A549 (cell line): ENCODE measurements at regions of chr2 and their contacts with region 1.

Region 1: GRCh38 chr2:37414470-37414949 is 70.1 kb downstream of the QPCT start:
- DNase-seq: peak; percentile 68 to 69
- ATAC-seq: peak; percentile 90 to 93
- H3K4me3 ChIP-seq: no peak overlapping the region
- H3K27ac ChIP-seq: peak overlapping the region; percentile 8 to 15; a peak in 2 of 6 replicates
- H3K4me1 ChIP-seq: peaks cover 6% of the 10 kb centered on the region; the same call in 2 of the 3 replicates
- CTCF ChIP-seq: peak; percentile 99
- EP300 ChIP-seq: no peak
- POLR2A ChIP-seq: no peak
- RAD21 ChIP-seq: peak; percentile 99

Region 2: DNA sequence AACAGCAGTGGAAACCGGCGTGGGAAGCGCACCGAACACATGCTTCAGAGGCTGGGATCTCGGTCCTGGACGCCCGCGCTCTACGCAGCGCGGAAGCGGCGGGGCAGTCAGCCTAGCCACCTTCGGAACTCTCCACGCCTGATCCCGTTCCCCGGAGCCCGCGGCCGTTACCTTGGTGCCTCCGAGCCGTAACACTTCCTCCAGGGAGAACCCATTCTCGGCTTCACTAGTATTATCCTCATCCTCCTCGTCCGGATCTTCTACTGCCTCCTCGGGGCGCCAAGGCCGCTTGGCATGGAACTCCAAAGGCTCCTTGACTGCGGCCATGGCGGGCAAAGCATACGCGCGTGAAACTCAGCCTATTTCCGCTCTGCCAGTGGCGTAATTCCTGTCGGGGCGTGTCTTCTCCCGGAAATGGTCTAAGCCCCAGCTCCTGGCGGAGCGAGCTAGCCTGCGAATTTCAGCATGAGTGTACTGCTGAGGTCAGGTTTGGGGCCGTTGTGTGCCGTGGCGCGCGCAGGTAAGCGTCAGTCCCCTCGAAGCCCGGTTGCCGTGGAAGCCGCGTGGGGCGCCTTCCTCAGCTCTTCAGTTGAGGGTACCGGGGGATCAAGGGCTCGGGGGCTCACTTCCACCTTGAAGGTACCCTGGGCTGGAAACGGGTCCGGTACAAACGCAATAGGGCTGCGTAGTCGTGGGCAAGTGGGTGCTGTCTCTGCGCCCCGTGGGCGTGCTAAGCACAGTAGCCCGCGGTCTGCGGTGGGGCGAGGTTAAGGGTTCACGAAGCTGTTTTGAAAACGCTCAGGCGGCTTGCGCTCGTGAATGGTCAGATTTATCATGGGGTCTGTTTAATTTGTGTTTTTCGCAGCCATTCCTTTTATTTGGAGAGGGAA is 183.0 kb before region 1 on chr2 and contains the starts of genes CEBPZ and NDUFAF7:
- CTCF ChIA-PET with region 1: no interaction called
- POLR2A ChIA-PET with region 1: no interaction called
- DNase-seq: peak; percentile 92 to 98
- ATAC-seq: peak; percentile 97 to 99
- H3K4me3 ChIP-seq: peak within 1 kb of the TSS; percentile 91
- H3K27ac ChIP-seq: peak within 1 kb of the TSS; percentile 92 to 95
- H3K4me1 ChIP-seq: peaks cover 27% of the 10 kb centered on the region
- CTCF ChIP-seq: no peak
- EP300 ChIP-seq: no peak
- POLR2A ChIP-seq: peak; percentile 97
- RAD21 ChIP-seq: no peak; a peak in 1 of 5 replicates
- polyA plus RNA-seq, gene CEBPZ: 44.1 and 70.9 TPM in 2 replicates
- polyA plus RNA-seq, gene NDUFAF7: 40.2 and 48.0 TPM in 2 replicates

Region 3: DNA sequence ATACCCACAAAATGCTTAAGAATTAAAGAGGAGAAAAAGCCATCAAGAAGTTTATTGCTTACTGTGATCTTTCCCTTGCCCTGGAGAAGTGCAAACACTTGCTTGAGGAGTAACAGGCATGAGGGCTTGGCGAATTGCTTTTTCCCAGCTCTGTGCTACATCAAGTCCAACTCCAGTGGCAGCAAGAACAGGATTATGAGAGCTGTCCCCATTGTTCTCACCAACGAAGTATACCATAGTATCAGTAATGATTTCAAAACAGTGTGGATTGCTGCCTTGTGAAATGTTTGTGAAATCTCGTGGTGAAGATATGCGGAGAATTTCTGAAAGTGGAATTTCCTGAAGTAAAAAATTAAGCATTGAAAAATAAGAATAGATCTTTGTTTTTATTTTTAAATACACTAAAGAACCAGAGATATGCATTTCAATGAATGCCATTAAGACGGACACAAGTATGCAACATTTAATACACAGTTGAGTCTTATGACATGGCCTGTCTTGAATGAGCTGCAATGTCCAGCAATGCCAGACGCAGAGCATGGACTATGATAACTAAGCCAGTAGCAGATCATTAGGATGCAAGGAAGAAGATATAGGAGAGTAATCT is 140.0 kb before region 1 on chr2:
- CTCF ChIA-PET with region 1: no interaction called
- POLR2A ChIA-PET with region 1: no interaction called
- DNase-seq: no peak
- ATAC-seq: no peak
- H3K4me3 ChIP-seq: no peak overlapping the region
- H3K27ac ChIP-seq: no peak overlapping the region
- H3K4me1 ChIP-seq: no peaks in the 10 kb centered on the region
- CTCF ChIP-seq: no peak
- EP300 ChIP-seq: no peak
- POLR2A ChIP-seq: no peak
- RAD21 ChIP-seq: no peak

Region 4: DNA sequence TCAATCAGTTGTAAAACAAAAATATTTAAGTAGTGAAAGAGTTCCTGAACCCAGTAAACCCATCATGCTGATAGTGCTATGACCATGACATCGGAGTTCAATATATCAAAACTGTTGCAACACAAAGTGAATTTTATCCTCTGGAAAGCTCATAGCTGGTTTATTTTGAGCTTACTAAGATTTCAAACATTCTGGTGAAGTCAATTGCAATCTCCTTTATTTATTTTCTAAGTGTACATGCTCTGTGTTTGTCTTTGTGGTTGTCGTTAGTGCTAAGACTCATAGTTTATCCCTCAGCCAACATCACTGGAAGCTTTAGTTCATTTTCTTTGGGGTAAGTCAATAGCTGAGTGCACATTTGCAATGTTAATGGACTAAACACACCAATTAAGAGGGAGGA is 21.8 kb after region 1 on chr2:
- CTCF ChIA-PET with region 1: interaction called, 18 read pairs
- POLR2A ChIA-PET with region 1: no interaction called
- DNase-seq: no peak
- ATAC-seq: no peak
- H3K4me3 ChIP-seq: no peak overlapping the region
- H3K27ac ChIP-seq: no peak overlapping the region
- H3K4me1 ChIP-seq: no peaks in the 10 kb centered on the region
- CTCF ChIP-seq: no peak
- EP300 ChIP-seq: no peak
- POLR2A ChIP-seq: no peak
- RAD21 ChIP-seq: no peak

Region 5: DNA sequence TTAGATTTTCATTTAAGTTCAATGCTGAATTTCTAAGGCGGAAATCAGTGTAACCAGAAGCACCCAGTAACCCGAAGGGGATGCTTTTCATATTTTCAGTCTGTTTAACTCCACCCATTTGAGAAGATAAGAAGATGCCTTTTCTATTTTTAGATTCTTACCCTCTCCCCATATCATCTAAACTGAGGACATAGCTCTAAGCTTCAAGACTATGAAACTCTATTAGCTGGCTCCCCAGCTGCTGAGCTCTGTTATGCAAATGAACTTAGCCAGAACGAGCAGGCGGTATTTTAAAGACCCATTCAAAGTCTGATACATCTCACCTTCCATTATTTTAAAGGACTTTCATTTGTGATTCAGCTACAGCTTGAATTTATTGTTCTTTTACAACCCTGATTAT is 240.4 kb after region 1 on chr2:
- CTCF ChIA-PET with region 1: interaction called, 10 read pairs
- POLR2A ChIA-PET with region 1: no interaction called
- DNase-seq: no peak
- ATAC-seq: no peak
- H3K4me3 ChIP-seq: no peak overlapping the region
- H3K27ac ChIP-seq: peak overlapping the region; percentile 11 to 85; a peak in 4 of 6 replicates
- H3K4me1 ChIP-seq: peaks cover 94% of the 10 kb centered on the region
- CTCF ChIP-seq: no peak
- EP300 ChIP-seq: no peak
- POLR2A ChIP-seq: no peak
- RAD21 ChIP-seq: no peak

Region 6: DNA sequence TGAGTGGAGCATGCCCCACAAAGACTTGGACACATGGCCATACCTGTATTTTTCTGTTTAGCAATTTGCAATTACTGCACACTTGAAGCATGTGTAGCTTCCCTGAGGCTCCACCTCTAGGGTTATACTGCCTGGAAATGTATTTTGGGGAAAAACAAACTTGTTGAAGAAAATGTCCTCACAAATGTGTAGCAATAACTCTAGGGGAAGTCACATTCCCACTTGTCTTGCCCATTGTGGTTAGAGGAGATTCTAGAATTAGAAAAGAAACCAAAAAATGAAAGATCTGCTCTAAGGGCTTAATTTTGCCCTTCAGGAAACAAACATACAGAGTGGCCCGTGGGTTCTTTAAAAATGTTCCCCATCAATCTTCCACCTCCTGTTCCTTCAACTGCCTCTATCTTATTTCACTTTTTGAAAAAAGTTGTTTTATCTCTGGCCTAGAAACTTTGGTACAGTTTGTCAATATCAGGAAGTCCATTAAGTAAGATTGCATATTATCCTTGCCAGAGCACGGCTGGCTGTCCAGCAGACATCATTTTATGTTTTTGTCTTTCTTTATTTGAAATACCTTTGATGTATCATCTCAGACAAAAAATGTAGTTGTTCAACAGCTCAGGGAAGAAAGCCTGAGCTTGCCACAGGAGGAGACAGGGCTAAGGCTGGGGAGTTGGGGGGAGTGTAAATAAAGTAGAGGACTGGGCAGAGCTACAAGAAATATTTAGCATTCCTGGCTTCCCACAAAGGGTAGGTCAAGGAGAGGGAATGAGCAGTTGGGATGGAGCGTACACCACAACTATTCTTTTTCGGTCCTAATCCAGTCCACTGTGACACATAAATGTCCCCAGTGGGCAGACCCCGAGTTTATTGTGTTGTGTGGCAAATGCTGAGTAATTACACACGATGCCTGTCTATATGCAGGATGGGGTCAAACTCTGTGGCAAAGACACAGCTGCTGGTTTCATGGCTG is 353.7 kb after region 1 on chr2:
- CTCF ChIA-PET with region 1: interaction called, 11 read pairs
- POLR2A ChIA-PET with region 1: interaction called, 4 read pairs
- DNase-seq: peak; percentile 53 to 87
- ATAC-seq: peak; percentile 80 to 95
- H3K4me3 ChIP-seq: no peak overlapping the region
- H3K27ac ChIP-seq: peak overlapping the region; percentile 86 to 92
- H3K4me1 ChIP-seq: peaks cover 71% of the 10 kb centered on the region
- CTCF ChIP-seq: no peak
- EP300 ChIP-seq: peak; percentile 72 to 88; a peak in 4 of 5 replicates
- POLR2A ChIP-seq: no peak
- RAD21 ChIP-seq: peak; percentile 40 to 66

Region 7: DNA sequence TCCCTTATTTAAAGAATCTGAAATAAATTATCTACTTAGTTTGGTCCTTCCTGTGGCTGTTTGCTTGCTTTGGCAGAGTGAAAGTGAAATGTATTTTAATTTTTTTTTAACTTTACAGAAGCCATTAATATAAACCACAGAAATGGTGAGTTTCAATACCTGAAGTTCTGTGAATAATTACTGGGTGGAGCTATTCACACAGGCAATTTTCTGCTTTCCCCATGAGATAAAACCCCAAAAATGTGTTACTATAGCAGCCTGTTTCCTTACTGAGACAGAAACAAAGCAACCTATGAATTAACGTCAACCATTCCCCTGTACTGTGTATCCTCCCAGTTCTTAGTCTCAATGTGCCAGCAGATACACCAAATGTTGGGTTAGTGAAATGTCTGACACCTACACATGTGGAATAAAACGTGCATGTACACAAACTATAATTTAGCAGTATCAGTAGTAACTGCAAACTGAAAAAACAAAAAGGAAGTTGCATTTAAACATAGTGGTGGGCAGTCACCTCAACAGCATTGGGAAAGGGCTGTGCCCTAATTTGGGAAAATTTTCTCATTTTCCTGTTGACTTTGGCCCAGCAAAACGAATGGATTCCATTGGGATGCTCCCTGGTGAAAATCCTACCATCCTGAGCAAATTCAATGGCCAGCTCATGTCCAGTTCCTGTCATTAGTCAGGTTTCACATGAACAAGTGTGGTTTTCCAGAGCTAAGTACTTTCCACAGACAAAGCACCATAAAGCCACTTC is 437.5 kb after region 1 on chr2:
- CTCF ChIA-PET with region 1: interaction called, 15 read pairs
- POLR2A ChIA-PET with region 1: no interaction called
- DNase-seq: no peak
- ATAC-seq: no peak
- H3K4me3 ChIP-seq: no peak overlapping the region
- H3K27ac ChIP-seq: no peak overlapping the region
- H3K4me1 ChIP-seq: no peaks in the 10 kb centered on the region
- CTCF ChIP-seq: no peak
- EP300 ChIP-seq: no peak
- POLR2A ChIP-seq: no peak
- RAD21 ChIP-seq: no peak